ENCODE measurements at regions of chr16 and their contacts with region 1.

Region 1: GRCh38 chr16:3983081-3983520 is 102.6 kb upstream of the CREBBP start:
- DNase-seq: peak; percentile 69
- ATAC-seq: peak; percentile 64
- H3K4me3 ChIP-seq: no peak overlapping the region
- H3K27ac ChIP-seq: no peak overlapping the region
- H3K4me1 ChIP-seq: peaks cover 13% of the 10 kb centered on the region
- H3K27me3 ChIP-seq: no peaks in the 10 kb centered on the region
- CTCF ChIP-seq: peak; percentile 80
- POLR2A ChIP-seq: no peak
- RAD21 ChIP-seq: peak; percentile 92

Region 2: DNA sequence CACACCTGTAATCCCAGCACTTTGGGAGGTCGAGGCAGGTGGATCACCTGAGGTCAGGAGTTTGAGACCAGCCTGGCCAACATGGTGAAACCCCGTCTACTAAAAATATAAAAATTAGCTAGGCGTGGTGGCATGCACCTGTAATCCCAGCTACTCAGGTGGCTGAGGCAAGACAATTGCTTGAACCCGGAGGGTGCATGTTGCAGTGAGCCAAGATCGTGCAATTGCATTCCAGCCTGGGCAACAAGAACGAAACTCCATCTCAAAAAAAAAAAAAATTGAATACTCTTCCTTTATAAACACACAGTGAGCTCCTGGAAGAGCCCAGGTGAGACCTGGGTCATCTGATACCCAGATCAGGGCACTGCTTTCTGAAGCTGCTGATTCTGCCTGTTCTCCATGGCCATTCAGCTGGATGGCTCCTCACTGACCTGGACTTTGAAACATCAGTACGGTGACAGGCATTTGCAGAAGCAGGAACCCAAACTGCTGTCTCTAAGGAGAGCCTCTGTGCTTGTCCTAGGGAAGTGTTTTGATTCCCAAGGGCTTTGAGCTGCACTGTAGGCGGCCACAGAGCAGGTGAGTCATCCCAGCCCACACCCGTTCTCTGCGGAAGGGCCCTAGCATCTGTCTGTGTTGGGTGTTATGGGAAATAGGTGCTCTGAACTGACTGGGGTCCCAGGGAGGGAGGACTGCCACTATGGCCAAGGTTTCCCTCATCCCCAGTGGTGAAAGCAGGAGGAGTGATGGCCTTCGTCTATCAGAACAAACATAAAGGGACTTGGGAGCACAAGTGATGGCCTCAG is 193.7 kb after region 1 on chr16:
- CTCF ChIA-PET with region 1: interaction called, 3 read pairs
- POLR2A ChIA-PET with region 1: no interaction called
- dilution Hi-C with region 1: no loop called
- in situ Hi-C with region 1: no loop called
- intact Hi-C with region 1: loop called (anchors 10 kb)
- DNase-seq: peak; percentile 73
- ATAC-seq: peak; percentile 67
- H3K4me3 ChIP-seq: no peak overlapping the region
- H3K27ac ChIP-seq: no peak overlapping the region
- H3K4me1 ChIP-seq: peaks cover 13% of the 10 kb centered on the region
- H3K27me3 ChIP-seq: no peaks in the 10 kb centered on the region
- CTCF ChIP-seq: no peak
- POLR2A ChIP-seq: no peak
- RAD21 ChIP-seq: no peak

Region 3: DNA sequence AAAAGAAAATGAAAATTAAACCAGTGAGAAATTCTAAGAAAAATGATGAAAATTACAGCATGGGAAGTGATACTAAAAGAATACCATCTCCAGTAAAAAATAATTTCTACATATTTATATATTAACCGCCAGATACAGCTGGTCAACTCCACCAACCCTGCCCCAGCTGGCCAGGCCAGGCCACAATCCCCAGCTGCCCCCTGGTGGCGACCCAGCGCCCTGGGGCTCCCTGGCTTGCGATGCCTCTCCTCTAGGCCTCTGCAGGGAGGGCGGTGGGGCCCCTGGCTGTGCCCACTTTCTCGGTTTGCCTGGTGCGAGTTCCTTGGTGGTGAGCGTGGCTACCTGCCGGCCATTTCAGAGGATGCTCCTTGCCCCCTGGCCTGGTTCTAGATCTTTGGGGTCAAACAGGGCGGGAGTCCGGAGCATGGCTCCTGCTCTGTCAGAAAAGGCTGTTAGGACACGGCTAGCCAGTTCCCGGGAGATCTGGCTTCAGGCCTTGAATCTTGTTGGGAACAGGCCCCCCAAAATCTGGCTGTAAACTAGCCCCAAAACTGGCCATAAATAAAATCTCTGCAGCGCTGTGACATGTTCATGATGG is 347.3 kb after region 1 on chr16:
- CTCF ChIA-PET with region 1: no interaction called
- POLR2A ChIA-PET with region 1: no interaction called
- dilution Hi-C with region 1: no loop called
- in situ Hi-C with region 1: loop called (anchors 10 kb)
- intact Hi-C with region 1: no loop called
- DNase-seq: peak; percentile 63
- ATAC-seq: peak; percentile 79
- H3K4me3 ChIP-seq: no peak overlapping the region
- H3K27ac ChIP-seq: no peak overlapping the region
- H3K4me1 ChIP-seq: peaks cover 20% of the 10 kb centered on the region
- H3K27me3 ChIP-seq: no peaks in the 10 kb centered on the region
- CTCF ChIP-seq: peak; percentile 96
- POLR2A ChIP-seq: no peak
- RAD21 ChIP-seq: peak; percentile 97

Measured in IMR-90 (cell line).